ENCODE measurements at regions of chr20 and their contacts with region 1.

Region 1: DNA sequence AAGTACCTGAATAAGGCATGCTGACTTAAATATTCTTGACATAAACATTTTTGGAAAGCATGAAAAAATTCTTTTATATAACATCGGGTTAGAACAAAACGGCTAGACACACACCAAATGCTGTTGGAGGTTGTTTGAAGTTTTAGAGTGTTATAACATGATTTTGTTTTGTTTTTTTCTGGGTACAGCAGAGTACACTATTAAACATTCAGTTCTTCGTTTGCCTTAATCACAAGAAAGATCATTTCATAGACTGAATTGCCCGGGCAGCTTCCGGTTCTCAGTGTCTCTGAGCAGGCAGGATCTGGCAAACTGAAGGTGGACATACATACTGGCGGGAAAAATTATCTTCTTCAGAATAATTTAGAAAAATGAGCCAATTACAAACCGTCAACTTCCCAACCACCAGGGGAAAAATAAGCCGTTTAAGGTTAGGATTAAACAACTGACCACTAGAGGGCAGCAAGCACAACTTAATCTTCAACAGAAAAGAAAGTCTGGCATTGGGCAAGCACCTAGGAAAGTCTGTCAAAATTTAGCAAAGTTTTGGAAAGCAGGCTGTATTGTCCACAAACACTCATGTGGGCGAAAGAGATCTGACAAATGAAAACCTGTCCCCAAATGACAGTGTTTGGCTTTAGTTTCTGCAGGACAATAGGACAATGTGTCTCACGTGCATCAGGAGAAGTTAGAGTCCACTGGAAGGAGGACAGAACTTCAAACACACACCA is 15.0 kb downstream of the ZNF217 start:
- DNase-seq: peak; percentile 52
- H3K4me3 ChIP-seq: no peak overlapping the region
- CTCF ChIP-seq: peak; percentile 54

Region 2: GRCh38 chr20:53934421-53935343 is 356.0 kb after region 1 on chr20:
- CTCF ChIA-PET with region 1: interaction called, 128 read pairs
- POLR2A ChIA-PET with region 1: interaction called, 3 read pairs
- DNase-seq: no peak
- H3K4me3 ChIP-seq: no peak overlapping the region
- CTCF ChIP-seq: no peak